ENCODE measurements at regions of chr1 and their contacts with region 1.

Region 1: DNA sequence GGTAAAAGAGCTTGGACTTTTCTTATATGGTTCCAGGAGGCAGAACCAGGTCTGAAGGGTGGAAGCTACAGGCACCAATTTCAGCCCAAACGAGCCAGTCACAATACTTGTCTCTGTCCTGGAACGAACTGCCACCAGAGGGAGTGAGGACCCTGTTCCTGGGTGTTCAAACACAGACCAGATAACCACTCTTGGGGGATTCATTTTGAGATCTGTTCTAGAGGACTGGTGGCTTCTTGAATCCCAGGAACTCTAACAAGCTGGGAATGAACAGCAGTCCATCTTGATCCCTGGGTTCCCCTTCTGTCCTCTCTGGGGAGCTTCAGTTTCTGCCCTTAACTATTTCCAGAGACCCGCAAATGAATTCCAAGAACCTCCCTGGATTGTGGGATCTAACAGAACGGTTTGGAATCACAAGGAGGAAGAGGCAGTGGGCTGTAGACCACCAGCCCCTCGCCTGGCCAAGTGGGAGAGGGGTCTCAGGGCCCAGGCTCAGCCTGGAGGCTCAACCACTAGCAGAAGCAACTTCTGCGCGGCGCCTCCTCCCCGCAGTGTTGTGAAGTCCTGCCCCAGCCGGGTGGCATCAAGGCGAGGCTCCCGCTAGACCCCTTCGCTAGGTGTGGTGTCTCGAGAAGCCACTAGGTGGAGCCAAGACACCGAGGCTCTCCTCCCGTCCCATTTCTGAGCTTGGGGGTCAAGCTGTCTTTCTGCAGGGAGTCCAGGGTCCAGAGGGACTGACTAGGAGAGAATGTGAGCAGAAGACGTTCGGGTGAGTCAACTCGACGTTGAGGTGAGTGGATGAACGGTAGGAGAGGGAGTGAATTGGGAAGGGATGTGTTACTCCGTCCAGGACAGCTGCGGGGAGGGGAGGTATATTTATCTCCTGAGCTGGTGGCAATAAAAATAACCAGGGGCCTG is 12.1 kb upstream of the NES start:
- DNase-seq: peak; percentile 86 to 92
- ATAC-seq: peak; percentile 88 to 93
- H3K4me3 ChIP-seq: peak overlapping the region; percentile 36
- H3K27ac ChIP-seq: peak overlapping the region; percentile 57 to 78; a peak in 5 of 6 replicates
- H3K4me1 ChIP-seq: peaks cover 55% of the 10 kb centered on the region
- CTCF ChIP-seq: peak; percentile 77
- EP300 ChIP-seq: no peak
- POLR2A ChIP-seq: no peak
- RAD21 ChIP-seq: peak; percentile 91 to 97

Region 2: DNA sequence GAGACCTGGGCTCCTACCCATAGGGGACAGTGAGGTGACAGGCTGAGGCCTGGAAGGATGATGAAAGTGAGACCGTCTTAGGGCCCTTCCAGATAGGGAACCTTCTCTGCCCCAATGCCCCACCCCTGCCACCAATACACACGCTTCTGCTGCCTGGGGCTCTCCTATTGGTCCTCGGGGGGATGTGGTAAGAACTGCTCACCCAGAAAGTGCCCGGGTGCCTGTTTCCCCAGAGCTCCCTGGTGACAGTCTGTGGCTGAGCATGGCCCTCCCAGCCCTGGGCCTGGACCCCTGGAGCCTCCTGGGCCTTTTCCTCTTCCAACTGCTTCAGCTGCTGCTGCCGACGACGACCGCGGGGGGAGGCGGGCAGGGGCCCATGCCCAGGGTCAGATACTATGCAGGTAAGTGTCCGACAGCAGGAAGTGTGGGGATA is 535.0 kb before region 1 on chr1:
- CTCF ChIA-PET with region 1: no interaction called
- POLR2A ChIA-PET with region 1: no interaction called
- DNase-seq: no peak
- ATAC-seq: no peak
- H3K4me3 ChIP-seq: no peak overlapping the region
- H3K27ac ChIP-seq: no peak overlapping the region
- H3K4me1 ChIP-seq: 0 out of 3 replicates have a peak, but pooled peaks cover 4% of the 10 kb centered on the region
- CTCF ChIP-seq: no peak
- EP300 ChIP-seq: no peak
- POLR2A ChIP-seq: no peak
- RAD21 ChIP-seq: no peak

Region 3: GRCh38 chr1:156601122-156601830 is 88.0 kb before region 1 on chr1 and contains the start of gene GPATCH4:
- CTCF ChIA-PET with region 1: no interaction called
- POLR2A ChIA-PET with region 1: no interaction called
- DNase-seq: peak; percentile 89 to 92
- ATAC-seq: peak; percentile 86 to 87
- H3K4me3 ChIP-seq: peak within 1 kb of the TSS; percentile 77
- H3K27ac ChIP-seq: peak within 1 kb of the TSS; percentile 86 to 94
- H3K4me1 ChIP-seq: peaks cover 19% of the 10 kb centered on the region
- CTCF ChIP-seq: no peak
- EP300 ChIP-seq: no peak
- POLR2A ChIP-seq: peak; percentile 87
- RAD21 ChIP-seq: no peak
- polyA plus RNA-seq, gene GPATCH4: 68.1 and 76.1 TPM in 2 replicates

Region 4: DNA sequence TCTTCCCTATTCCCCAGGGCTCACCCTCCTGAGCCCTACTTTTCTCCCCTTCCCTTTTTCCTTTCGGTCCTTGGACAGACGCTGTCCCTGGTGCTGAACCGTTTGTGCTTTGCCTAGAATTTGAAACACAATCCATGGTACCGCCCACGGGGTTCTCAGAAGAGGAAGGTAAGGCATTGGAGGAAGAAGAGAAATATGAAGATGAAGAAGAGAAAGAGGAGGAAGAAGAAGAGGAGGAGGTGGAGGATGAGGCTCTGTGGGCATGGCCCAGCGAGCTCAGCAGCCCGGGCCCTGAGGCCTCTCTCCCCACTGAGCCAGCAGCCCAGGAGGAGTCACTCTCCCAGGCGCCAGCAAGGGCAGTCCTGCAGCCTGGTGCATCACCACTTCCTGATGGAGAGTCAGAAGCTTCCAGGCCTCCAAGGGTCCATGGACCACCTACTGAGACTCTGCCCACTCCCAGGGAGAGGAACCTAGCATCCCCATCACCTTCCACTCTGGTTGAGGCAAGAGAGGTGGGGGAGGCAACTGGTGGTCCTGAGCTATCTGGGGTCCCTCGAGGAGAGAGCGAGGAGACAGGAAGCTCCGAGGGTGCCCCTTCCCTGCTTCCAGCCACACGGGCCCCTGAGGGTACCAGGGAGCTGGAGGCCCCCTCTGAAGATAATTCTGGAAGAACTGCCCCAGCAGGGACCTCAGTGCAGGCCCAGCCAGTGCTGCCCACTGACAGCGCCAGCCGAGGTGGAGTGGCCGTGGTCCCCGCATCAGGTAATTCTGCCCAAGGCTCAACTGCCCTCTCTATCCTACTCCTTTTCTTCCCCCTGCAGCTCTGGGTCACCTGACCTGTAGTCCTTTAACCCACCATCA is 36.9 kb before region 1 on chr1:
- CTCF ChIA-PET with region 1: interaction called, 27 read pairs
- POLR2A ChIA-PET with region 1: no interaction called
- DNase-seq: no peak
- ATAC-seq: no peak
- H3K4me3 ChIP-seq: no peak overlapping the region
- H3K27ac ChIP-seq: no peak overlapping the region
- H3K4me1 ChIP-seq: 0 out of 3 replicates have a peak, but pooled peaks cover 7% of the 10 kb centered on the region
- CTCF ChIP-seq: no peak
- EP300 ChIP-seq: no peak
- POLR2A ChIP-seq: no peak
- RAD21 ChIP-seq: no peak

Region 5: GRCh38 chr1:156728597-156729462 is 39.5 kb after region 1 on chr1 and contains the start of gene ISG20L2:
- CTCF ChIA-PET with region 1: interaction called, 2,258 read pairs
- POLR2A ChIA-PET with region 1: interaction called, 15 read pairs
- DNase-seq: peak; percentile 94 to 99
- ATAC-seq: peak; percentile 87 to 89
- H3K4me3 ChIP-seq: peak within 1 kb of the TSS; percentile 89
- H3K27ac ChIP-seq: peak within 1 kb of the TSS; percentile 93
- H3K4me1 ChIP-seq: peaks cover 35% of the 10 kb centered on the region
- CTCF ChIP-seq: no peak
- EP300 ChIP-seq: no peak
- POLR2A ChIP-seq: peak; percentile 29
- RAD21 ChIP-seq: no peak
- polyA plus RNA-seq, gene ISG20L2: 42.5 and 55.7 TPM in 2 replicates

Region 6: GRCh38 chr1:156797212-156797871 is 108.0 kb after region 1 on chr1:
- CTCF ChIA-PET with region 1: interaction called, 39 read pairs
- POLR2A ChIA-PET with region 1: no interaction called
- DNase-seq: peak; percentile 68 to 75
- ATAC-seq: peak; percentile 89 to 91
- H3K4me3 ChIP-seq: no peak overlapping the region
- H3K27ac ChIP-seq: no peak overlapping the region
- H3K4me1 ChIP-seq: no peaks in the 10 kb centered on the region
- CTCF ChIP-seq: peak; percentile 87
- EP300 ChIP-seq: no peak
- POLR2A ChIP-seq: no peak
- RAD21 ChIP-seq: peak; percentile 72 to 78

Region 7: DNA sequence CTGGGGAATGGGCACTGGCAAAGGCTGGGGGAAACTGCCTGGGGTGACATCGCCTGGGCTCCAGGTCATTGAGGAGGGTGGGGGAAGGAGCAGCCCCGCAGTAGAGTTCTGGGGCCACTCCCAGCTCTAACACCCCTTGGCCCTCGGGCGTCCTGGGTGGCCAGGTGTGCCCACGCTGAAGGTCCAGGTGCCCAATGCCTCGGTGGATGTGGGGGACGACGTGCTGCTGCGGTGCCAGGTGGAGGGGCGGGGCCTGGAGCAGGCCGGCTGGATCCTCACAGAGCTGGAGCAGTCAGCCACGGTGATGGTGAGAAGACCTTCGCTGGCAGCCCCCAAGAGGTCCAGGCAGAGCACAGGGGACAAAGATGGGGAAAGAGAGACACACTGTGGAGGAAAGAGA is 179.0 kb after region 1 on chr1:
- CTCF ChIA-PET with region 1: interaction called, 18 read pairs
- POLR2A ChIA-PET with region 1: no interaction called
- DNase-seq: no peak
- ATAC-seq: no peak
- H3K4me3 ChIP-seq: no peak overlapping the region
- H3K27ac ChIP-seq: no peak overlapping the region
- H3K4me1 ChIP-seq: peaks cover 13% of the 10 kb centered on the region
- CTCF ChIP-seq: no peak
- EP300 ChIP-seq: no peak
- POLR2A ChIP-seq: no peak
- RAD21 ChIP-seq: no peak

Region 8: DNA sequence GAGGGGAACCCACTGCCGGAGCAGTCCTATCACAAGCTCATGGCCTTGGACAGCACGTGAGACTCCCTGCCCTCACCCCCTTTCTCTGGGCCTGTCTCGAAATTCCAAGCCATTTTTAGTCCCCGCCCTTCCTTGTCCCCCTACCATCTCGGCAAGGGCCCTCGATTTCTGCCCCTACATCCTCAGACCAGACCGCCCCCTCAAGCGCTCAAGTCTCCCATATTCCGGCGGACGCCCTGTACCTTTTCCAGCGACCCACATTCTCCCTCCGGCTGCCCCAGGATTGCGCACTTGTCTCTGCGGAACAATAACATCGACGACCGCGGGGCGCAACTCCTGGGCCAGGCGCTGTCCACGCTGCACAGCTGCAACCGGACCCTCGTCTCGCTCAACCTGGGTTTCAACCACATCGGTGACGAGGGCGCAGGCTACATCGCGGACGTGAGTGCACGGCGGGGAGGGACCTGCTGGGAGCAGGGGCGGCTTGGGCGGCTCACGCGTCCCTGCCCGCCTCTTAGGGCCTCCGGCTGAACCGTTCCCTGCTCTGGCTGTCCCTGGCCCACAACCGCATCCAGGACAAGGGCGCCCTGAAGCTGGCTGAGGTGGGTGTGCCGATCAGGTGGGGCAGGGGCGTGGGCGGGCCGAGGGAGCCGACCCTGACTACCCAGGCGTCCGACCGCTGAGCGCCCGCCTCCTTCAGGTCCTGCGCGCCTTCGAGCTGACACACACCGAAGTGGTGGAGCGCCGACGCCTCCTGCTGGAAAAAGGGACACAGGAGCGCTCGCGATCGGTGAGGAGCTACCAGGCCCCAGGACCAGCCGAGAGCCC is 238.1 kb after region 1 on chr1:
- CTCF ChIA-PET with region 1: interaction called, 38 read pairs
- POLR2A ChIA-PET with region 1: no interaction called
- DNase-seq: peak; percentile 84 to 87
- ATAC-seq: peak; percentile 85 to 94
- H3K4me3 ChIP-seq: peak overlapping the region; percentile 46
- H3K27ac ChIP-seq: peak overlapping the region; percentile 61 to 82; a peak in 5 of 6 replicates
- H3K4me1 ChIP-seq: peaks cover 7% of the 10 kb centered on the region; the same call in 1 of the 3 replicates
- CTCF ChIP-seq: peak; percentile 82
- EP300 ChIP-seq: no peak
- POLR2A ChIP-seq: no peak
- RAD21 ChIP-seq: peak; percentile 90 to 92

Measured in A549 (cell line).